Activated naive CD4-positive, alpha-beta T cell treated with anti-CD3 and anti-CD28 coated beads for 36 hours (primary cell): ENCODE measurements at regions of chr7 and their contacts with region 1.

Region 1: GRCh38 chr7:133081599-133082389 is at the start of gene CHCHD3:
- DNase-seq: peak; percentile 99
- H3K4me3 Mint-ChIP-seq: peak within 1 kb of the TSS; percentile 78
- H3K27ac Mint-ChIP-seq: peak within 1 kb of the TSS; percentile 78
- H3K4me1 Mint-ChIP-seq: peaks cover 27% of the 10 kb centered on the region
- H3K27me3 Mint-ChIP-seq: no peaks in the 10 kb centered on the region
- total RNA-seq, gene CHCHD3: 62.0 to 65.0 TPM

Region 2: DNA sequence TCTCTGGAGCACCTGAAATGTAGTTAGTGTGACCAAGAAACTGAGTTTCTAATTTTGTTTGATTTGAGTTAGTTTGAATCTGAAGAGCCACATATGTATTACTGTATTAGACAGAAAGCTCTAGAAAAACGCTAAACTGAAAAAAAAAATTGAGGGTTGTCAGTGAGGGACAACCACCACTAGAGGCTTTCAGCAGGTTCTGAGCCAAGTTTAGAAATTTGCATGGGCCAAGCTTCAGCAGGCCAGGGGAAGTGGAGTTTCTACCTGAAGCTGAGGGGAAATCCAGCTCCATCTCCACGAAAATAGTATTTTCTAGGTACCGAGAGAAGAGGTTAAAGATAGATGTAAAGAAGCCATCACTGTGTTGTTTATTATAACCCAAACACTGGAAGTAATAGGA is 427.6 kb before region 1 on chr7:
- CTCF ChIA-PET with region 1: no interaction called
- intact Hi-C with region 1: loop called (anchors 1 kb)
- DNase-seq: peak; percentile 53
- H3K4me3 Mint-ChIP-seq: no peak overlapping the region
- H3K27ac Mint-ChIP-seq: peak overlapping the region; percentile 74
- H3K4me1 Mint-ChIP-seq: peaks cover 39% of the 10 kb centered on the region
- H3K27me3 Mint-ChIP-seq: no peaks in the 10 kb centered on the region

Region 3: DNA sequence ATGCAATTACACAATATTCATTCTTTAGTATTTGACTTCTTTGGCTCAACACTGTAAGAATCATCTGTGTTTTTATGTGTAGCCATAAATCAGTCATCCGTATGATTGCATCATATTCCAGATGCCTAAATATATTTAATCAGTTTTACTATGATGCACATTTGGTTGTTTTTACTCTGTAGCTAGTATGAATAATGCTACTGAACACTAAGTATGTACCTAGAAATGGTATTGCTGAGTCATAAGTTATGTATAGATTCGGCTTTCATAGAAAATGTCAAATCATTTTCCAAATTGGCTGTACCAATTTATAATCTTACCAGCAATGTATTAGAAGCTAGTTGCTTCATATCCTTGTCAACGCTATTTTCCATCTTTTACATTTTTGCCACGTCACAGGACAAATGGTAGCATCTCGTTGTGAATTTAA is 308.3 kb before region 1 on chr7:
- CTCF ChIA-PET with region 1: no interaction called
- intact Hi-C with region 1: loop called (anchors 2 kb)
- DNase-seq: no peak
- H3K4me3 Mint-ChIP-seq: no peak overlapping the region
- H3K27ac Mint-ChIP-seq: no peak overlapping the region
- H3K4me1 Mint-ChIP-seq: peaks cover 39% of the 10 kb centered on the region
- H3K27me3 Mint-ChIP-seq: no peaks in the 10 kb centered on the region

Region 4: GRCh38 chr7:132882714-132883428 is 198.9 kb before region 1 on chr7:
- CTCF ChIA-PET with region 1: no interaction called
- intact Hi-C with region 1: loop called (anchors 1 kb)
- DNase-seq: peak; percentile 65
- H3K4me3 Mint-ChIP-seq: no peak overlapping the region
- H3K27ac Mint-ChIP-seq: peak overlapping the region; percentile 47
- H3K4me1 Mint-ChIP-seq: peaks cover 32% of the 10 kb centered on the region
- H3K27me3 Mint-ChIP-seq: no peaks in the 10 kb centered on the region

Region 5: DNA sequence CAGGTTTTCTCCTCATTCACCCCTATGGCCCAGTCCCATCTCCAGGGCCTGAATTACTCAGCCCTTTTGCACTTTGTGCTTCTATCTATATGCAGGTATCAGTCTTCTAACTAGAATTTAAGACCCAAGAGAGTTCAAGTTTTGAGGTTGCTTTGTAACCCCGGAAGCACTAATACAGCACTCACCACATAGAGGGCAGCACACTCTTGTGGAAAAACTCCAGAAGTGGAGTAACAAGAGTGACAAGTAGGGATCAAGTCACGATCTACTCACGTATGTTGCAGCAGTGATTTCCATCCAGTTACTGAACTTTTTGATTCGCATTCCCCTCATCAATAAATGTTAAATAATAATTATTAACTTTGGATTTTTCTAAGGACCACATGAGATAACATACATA is 150.9 kb before region 1 on chr7:
- CTCF ChIA-PET with region 1: no interaction called
- intact Hi-C with region 1: no loop called
- DNase-seq: no peak
- H3K4me3 Mint-ChIP-seq: no peak overlapping the region
- H3K27ac Mint-ChIP-seq: no peak overlapping the region
- H3K4me1 Mint-ChIP-seq: peaks cover 18% of the 10 kb centered on the region
- H3K27me3 Mint-ChIP-seq: no peaks in the 10 kb centered on the region

Region 6: DNA sequence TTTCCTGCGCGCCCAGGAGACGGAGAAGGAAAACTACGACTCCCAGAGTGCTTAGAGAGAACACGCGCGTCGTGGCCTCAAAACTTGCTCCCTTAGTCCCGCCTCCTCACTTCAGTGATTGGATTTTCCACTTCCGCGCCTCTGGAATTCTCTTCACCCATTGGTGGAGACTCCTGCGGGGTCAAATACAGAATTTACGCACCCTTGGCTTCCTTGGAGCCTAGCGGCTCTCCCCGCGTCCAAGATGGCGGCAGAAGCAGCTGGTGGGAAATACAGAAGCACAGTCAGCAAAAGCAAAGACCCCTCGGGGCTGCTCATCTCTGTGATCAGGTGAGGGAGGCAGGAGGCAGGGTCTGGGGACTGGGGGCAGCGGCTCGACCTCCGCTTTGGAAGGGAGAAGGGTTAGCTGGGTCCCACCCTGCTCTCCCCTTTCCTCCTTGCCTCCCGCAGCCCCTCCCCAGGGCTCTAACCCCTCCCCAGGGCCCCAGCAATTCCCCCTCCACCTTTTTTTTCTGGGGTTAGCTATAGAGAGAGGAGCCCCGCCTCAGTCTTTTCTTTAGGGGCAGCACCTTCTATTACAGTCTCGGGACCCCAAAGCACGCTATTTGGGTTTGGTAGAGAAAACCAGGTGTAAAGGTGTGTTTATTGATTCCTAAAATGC is 171.2 kb after region 1 on chr7 and contains the start of gene EXOC4:
- CTCF ChIA-PET with region 1: no interaction called
- intact Hi-C with region 1: loop called (anchors 1 kb)
- DNase-seq: peak; percentile 96
- H3K4me3 Mint-ChIP-seq: peak within 1 kb of the TSS; percentile 88
- H3K27ac Mint-ChIP-seq: peak within 1 kb of the TSS; percentile 82
- H3K4me1 Mint-ChIP-seq: peaks cover 29% of the 10 kb centered on the region
- H3K27me3 Mint-ChIP-seq: no peaks in the 10 kb centered on the region
- total RNA-seq, gene EXOC4: 57.1 to 62.1 TPM

Region 7: GRCh38 chr7:134126966-134127848 is 1045.4 kb after region 1 on chr7 and contains the start of gene LRGUK:
- CTCF ChIA-PET with region 1: no interaction called
- intact Hi-C with region 1: loop called (anchors 1 kb)
- DNase-seq: peak; percentile 86
- H3K4me3 Mint-ChIP-seq: peak within 1 kb of the TSS; percentile 84
- H3K27ac Mint-ChIP-seq: peak within 1 kb of the TSS; percentile 16
- H3K4me1 Mint-ChIP-seq: peaks cover 12% of the 10 kb centered on the region
- H3K27me3 Mint-ChIP-seq: peaks cover 15% of the 10 kb centered on the region
- total RNA-seq, gene LRGUK: 0.07 to 0.14 TPM